SK-N-SH (cell line): ENCODE measurements at regions of chr7 and their contacts with region 1.

Region 1: DNA sequence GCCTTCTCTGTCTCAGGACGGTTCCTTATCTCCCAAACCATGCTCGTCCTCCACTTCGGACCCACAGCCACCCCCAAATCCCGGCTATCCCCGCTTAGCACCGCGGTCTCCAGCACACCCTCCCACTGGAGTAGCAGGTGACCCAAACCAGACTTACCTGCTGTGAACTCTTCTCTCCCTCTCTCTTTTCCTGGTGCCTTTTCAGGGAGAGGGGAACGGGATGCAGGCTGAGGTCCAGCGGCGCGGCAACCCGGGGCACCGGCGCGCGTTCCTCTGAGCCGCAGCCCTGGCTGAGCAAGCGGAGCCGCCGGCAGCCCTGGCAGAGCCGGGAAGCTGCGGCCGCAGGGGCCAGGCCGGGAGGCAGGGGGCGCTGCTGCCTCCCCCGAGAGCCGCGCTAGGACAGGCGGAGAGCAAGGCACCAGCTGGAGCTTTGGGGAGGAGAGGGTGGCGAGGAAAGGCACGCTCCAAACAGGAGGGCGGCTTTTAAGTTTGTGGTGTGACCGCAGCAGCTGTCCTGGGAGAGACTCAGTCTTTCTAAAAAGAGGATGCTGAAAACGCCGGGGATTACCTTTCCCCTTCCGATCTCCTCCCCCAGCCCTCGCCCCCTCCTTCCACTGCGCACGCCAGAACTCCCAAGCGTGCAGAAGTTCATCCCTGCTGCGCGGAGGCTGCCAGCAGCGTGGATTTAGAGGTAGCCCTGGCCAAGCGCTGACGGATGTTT is at the start of gene SEMA3D:
- DNase-seq: peak; percentile 93
- H3K4me3 ChIP-seq: peak within 1 kb of the TSS; percentile 90 to 97
- H3K27ac ChIP-seq: peak within 1 kb of the TSS; percentile 29 to 61; a peak in 3 of 4 replicates
- H3K4me1 ChIP-seq: peaks cover 4 to 26% of the 10 kb centered on the region in 2 experiments; a peak in 3 of 4 replicates
- H3K27me3 ChIP-seq: no peaks in the 10 kb centered on the region
- CTCF ChIP-seq: peak; percentile 98
- EP300 ChIP-seq: no peak; a peak in 1 of 4 replicates
- RAD21 ChIP-seq: peak; percentile 77
- polyA plus RNA-seq, gene SEMA3D: 30.1 and 48.7 TPM in 2 replicates

Region 2: GRCh38 chr7:84589012-84589411 is 597.7 kb before region 1 on chr7:
- CTCF ChIA-PET with region 1: no interaction called
- POLR2A ChIA-PET with region 1: no interaction called
- DNase-seq: no peak
- H3K4me3 ChIP-seq: no peak overlapping the region
- H3K27ac ChIP-seq: no peak overlapping the region
- H3K4me1 ChIP-seq: no peaks in the 10 kb centered on the region
- H3K27me3 ChIP-seq: no peaks in the 10 kb centered on the region
- CTCF ChIP-seq: no peak
- EP300 ChIP-seq: no peak
- RAD21 ChIP-seq: no peak

Region 3: GRCh38 chr7:85030893-85031292 is 155.8 kb before region 1 on chr7:
- CTCF ChIA-PET with region 1: interaction called, 134 read pairs
- POLR2A ChIA-PET with region 1: no interaction called
- DNase-seq: peak; percentile 1
- H3K4me3 ChIP-seq: no peak overlapping the region
- H3K27ac ChIP-seq: no peak overlapping the region
- H3K4me1 ChIP-seq: peaks cover 0 to 5% of the 10 kb centered on the region in 2 experiments; a peak in 2 of 4 replicates
- H3K27me3 ChIP-seq: no peaks in the 10 kb centered on the region
- CTCF ChIP-seq: peak; percentile 95
- EP300 ChIP-seq: no peak
- RAD21 ChIP-seq: peak; percentile 78

Region 4: DNA sequence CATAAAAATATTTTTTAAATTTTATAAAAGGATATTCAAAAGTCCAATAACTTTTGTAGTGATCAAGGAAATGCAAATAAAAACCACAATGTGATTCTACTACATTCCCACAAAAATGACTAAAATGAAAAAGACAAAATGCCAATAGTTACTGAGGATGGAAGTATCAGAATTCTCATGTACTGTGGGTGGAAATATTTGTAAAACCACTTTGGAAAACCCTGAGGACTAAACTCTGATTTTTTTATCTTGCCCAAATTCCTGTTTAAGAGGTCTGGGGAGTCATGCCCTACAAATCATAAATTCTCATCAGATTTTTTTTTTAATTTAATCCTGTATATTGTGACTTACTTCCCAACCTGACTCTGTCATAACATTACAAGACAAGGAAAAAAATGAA is 10.0 kb after region 1 on chr7:
- CTCF ChIA-PET with region 1: interaction called, 15 read pairs
- POLR2A ChIA-PET with region 1: no interaction called
- DNase-seq: no peak
- H3K4me3 ChIP-seq: no peak overlapping the region
- H3K27ac ChIP-seq: no peak overlapping the region
- H3K4me1 ChIP-seq: no peaks in the 10 kb centered on the region
- H3K27me3 ChIP-seq: no peaks in the 10 kb centered on the region
- CTCF ChIP-seq: no peak
- EP300 ChIP-seq: no peak
- RAD21 ChIP-seq: no peak

Region 5: DNA sequence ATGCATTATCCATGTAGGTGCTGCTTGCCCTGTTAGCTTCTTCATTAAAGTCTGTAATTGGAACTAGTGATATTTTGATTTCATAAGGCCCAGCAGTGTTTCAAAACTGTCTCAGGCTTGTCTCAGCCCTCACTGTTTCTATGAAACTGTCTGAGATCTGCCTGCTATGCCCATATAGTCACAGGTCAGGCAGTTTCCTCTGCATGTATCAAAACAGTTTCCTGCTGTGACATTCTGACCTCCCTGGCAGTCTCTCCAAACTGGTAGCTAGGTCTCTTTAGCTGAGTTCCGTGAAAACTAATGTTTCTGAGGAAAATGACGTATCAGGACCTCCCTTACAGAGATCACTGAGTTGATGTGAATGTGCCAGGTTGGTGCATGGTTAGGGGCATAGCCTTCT is 19.1 kb after region 1 on chr7:
- CTCF ChIA-PET with region 1: interaction called, 15 read pairs
- POLR2A ChIA-PET with region 1: no interaction called
- DNase-seq: no peak
- H3K4me3 ChIP-seq: no peak overlapping the region
- H3K27ac ChIP-seq: no peak overlapping the region
- H3K4me1 ChIP-seq: no peaks in the 10 kb centered on the region
- H3K27me3 ChIP-seq: no peaks in the 10 kb centered on the region
- CTCF ChIP-seq: no peak
- EP300 ChIP-seq: no peak
- RAD21 ChIP-seq: no peak

Region 6: GRCh38 chr7:85705076-85705475 is 518.4 kb after region 1 on chr7:
- CTCF ChIA-PET with region 1: no interaction called
- POLR2A ChIA-PET with region 1: no interaction called
- DNase-seq: no peak
- H3K4me3 ChIP-seq: no peak overlapping the region
- H3K27ac ChIP-seq: no peak overlapping the region
- H3K4me1 ChIP-seq: peaks cover 0 to 4% of the 10 kb centered on the region in 2 experiments; a peak in 1 of 4 replicates
- H3K27me3 ChIP-seq: no peaks in the 10 kb centered on the region
- CTCF ChIP-seq: no peak
- EP300 ChIP-seq: no peak
- RAD21 ChIP-seq: no peak